Panc1 (cell line): ENCODE measurements at regions of chr21 and their contacts with region 1.

Region 1: DNA sequence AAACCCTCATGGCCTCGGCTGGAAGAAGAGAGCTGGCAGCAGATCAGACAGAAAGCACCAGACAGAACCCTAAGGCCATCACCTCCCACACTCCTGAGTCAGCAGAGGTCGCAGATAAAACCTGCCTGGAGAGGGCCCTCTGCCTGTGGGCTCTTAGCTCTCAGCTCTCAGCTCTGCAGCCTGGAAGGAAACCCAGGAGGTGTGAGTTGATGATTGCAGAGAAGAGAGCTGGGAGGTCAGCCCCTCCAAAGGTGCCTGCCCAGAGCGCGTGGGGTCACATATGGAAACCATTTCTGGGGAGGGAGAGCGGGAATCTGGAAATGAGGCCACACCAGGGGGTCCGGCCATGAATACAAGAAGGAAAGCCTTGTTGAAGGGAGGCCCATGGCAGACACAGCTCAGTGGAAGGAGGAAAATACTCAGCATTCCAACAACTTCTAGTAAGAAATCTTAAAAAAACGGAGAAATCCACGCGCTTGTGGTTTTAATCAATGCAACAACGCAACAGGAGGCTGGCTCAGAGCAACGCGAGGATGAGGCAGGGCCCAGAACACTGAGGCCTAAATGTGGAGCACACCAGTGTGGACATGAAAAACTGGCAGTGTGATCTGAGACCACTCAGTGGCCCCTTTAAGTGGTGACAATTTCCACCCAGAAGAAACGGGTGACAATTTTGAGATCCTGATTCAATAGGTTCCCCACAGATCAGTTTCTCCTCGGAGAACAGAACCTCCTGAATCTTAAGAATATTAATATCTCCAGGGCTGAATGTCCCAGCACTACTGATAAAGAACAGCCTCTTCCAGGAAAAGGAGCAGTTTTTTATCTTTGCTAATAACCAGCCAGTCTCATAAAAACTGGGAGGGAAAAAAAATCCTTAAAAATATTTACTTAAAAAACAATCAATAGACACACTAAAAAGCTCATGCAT is 45.7 kb downstream of the PSMG1 start:
- DNase-seq: no peak
- ATAC-seq: peak; percentile 67
- H3K4me3 ChIP-seq: no peak overlapping the region
- H3K27ac ChIP-seq: peak overlapping the region; percentile 45
- H3K4me1 ChIP-seq: peaks cover 12% of the 10 kb centered on the region
- H3K27me3 ChIP-seq: no peaks in the 10 kb centered on the region
- CTCF ChIP-seq: no peak

Region 2: GRCh38 chr21:38733973-38734546 is 403.5 kb before region 1 on chr21:
- CTCF ChIA-PET with region 1: interaction called, 18 read pairs
- POLR2A ChIA-PET with region 1: no interaction called
- in situ Hi-C with region 1: no loop called
- intact Hi-C with region 1: loop called (anchors 1 kb)
- DNase-seq: peak; percentile 85
- ATAC-seq: peak; percentile 96
- H3K4me3 ChIP-seq: peak overlapping the region; percentile 26 to 65
- H3K27ac ChIP-seq: peak overlapping the region; percentile 95
- H3K4me1 ChIP-seq: peaks cover 9% of the 10 kb centered on the region
- H3K27me3 ChIP-seq: no peaks in the 10 kb centered on the region
- CTCF ChIP-seq: peak; percentile 89

Region 3: DNA sequence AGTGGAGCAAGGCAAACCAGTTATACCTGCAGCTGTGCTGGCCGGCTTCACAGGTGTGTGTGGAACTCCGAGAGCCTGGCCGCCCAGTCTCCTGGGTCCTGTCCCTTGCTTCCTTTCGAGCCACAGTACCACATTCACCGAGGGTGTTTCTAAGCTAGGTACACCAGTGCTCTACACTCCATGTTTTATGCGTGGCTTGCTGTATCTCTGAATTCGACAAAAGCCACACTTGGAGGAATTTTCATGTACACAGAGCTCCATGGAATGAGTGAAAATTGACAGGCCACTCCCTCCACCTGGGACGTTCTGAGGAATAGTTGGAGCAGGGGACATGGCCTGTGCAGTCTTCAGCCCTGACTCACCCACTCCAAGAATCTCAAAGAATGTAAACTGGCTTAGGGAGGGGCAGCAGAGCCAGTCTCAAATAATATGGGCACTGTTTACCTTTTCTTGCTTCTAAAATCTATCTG is 317.8 kb before region 1 on chr21:
- CTCF ChIA-PET with region 1: interaction called, 3 read pairs
- POLR2A ChIA-PET with region 1: no interaction called
- in situ Hi-C with region 1: no loop called
- intact Hi-C with region 1: loop called (anchors 5 kb)
- DNase-seq: no peak
- ATAC-seq: no peak
- H3K4me3 ChIP-seq: no peak overlapping the region
- H3K27ac ChIP-seq: peak overlapping the region; percentile 69
- H3K4me1 ChIP-seq: peaks cover 79% of the 10 kb centered on the region
- H3K27me3 ChIP-seq: no peaks in the 10 kb centered on the region
- CTCF ChIP-seq: no peak

Region 4: GRCh38 chr21:39097335-39097861 is 40.1 kb before region 1 on chr21:
- CTCF ChIA-PET with region 1: no interaction called
- POLR2A ChIA-PET with region 1: no interaction called
- in situ Hi-C with region 1: no loop called
- intact Hi-C with region 1: no loop called
- DNase-seq: no peak
- ATAC-seq: no peak
- H3K4me3 ChIP-seq: no peak overlapping the region
- H3K27ac ChIP-seq: no peak overlapping the region
- H3K4me1 ChIP-seq: no peaks in the 10 kb centered on the region
- H3K27me3 ChIP-seq: no peaks in the 10 kb centered on the region
- CTCF ChIP-seq: no peak